Dendritic cell treated with granulocyte-macrophage colony-stimulating factor and Interleukin-4, amounts not matched to agents 40 ng/mL and 50 ng/mL, for 4 days (primary cell): ENCODE measurements at regions of chr7 and their contacts with region 1.

Region 1: DNA sequence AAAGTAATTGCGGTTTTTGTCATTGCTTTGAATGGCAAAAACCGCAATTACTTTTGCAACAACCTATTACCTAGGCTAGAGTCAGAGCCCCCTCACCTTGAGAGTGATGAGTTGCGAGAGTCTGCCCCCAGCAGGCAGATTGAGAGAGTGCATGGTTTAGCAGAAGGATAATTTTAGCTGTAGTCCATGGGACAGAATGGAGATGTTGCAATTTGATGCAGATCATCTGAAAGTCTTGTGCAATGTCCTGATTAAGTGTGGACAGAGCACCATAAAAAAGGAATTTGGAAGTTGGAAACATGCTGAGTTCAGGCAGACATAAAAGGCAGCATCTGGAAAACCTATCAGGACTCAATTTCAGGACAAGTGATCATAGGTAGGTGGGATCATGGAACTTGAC is 48.7 kb downstream of the GPR141 start:
- H3K4me3 Mint-ChIP-seq: no peak overlapping the region
- H3K27ac Mint-ChIP-seq: peak overlapping the region; percentile 28
- H3K4me1 Mint-ChIP-seq: peaks cover 51% of the 10 kb centered on the region
- H3K27me3 Mint-ChIP-seq: no peaks in the 10 kb centered on the region

Region 2: GRCh38 chr7:37633048-37633447 is 99.2 kb before region 1 on chr7:
- intact Hi-C with region 1: loop called (anchors 5 kb)
- H3K4me3 Mint-ChIP-seq: no peak overlapping the region
- H3K27ac Mint-ChIP-seq: no peak overlapping the region
- H3K4me1 Mint-ChIP-seq: no peaks in the 10 kb centered on the region
- H3K27me3 Mint-ChIP-seq: no peaks in the 10 kb centered on the region